ENCODE measurements at regions of chr2 and their contacts with region 1.

Region 1: DNA sequence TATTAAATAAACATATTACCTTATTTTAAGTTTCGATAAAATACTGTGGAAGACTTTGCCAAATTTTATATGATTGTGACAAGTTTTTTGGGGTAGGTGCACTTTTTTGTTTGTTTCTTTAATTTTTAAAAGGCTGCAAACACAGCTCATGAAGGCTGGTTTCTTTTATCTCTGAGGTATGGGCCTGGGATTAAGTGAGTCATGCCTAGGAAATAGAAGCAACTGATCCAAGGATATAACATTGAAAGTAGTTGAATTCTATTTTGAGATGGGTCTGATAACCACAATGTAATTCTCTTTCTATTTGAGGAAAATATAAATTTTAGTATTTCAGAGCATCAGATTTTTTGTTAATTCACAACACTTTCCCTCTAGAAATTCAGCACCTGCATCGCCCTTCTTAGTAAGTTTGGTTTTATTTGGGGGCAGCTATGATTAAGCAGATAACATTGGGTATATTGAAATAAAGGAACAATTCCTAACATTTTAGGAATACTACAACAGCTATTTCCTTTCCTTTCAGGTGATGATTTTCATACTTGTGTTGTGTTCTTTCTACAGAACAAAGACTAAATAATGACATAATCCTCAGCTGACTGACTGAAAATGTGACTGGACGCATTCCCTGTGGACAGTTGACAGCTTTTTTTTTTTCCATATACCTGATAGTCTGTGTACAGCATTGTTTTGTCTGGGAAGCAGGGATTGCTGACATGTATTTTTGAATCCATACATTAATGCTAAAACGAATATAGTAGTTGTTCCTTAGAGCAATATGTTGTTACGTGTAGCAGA is 16.8 kb downstream of the RBM45 start:
- DNase-seq: no peak
- H3K4me3 ChIP-seq: no peak overlapping the region
- H3K27ac ChIP-seq: no peak overlapping the region
- H3K4me1 ChIP-seq: peaks cover 0 to 4% (median 2%) of the 10 kb centered on the region in 4 experiments; a peak in 4 of 7 replicates
- H3K27me3 ChIP-seq: no peaks in the 10 kb centered on the region
- CTCF ChIP-seq: no peak
- EP300 ChIP-seq: no peak
- POLR2A ChIP-seq: no peak
- RAD21 ChIP-seq: no peak

Region 2: GRCh38 chr2:178029342-178029741 is 99.7 kb before region 1 on chr2:
- CTCF ChIA-PET with region 1: no interaction called
- POLR2A ChIA-PET with region 1: no interaction called
- DNase-seq: no peak
- H3K4me3 ChIP-seq: no peak overlapping the region
- H3K27ac ChIP-seq: no peak overlapping the region
- H3K4me1 ChIP-seq: no peaks in the 10 kb centered on the region
- H3K27me3 ChIP-seq: no peaks in the 10 kb centered on the region
- CTCF ChIP-seq: no peak
- EP300 ChIP-seq: no peak
- POLR2A ChIP-seq: no peak
- RAD21 ChIP-seq: no peak

Region 3: GRCh38 chr2:178142274-178143065 is 13.4 kb after region 1 on chr2:
- CTCF ChIA-PET with region 1: interaction called, 18 read pairs
- POLR2A ChIA-PET with region 1: no interaction called
- DNase-seq: no peak
- H3K4me3 ChIP-seq: no peak overlapping the region
- H3K27ac ChIP-seq: no peak overlapping the region
- H3K4me1 ChIP-seq: no peaks in the 10 kb centered on the region
- H3K27me3 ChIP-seq: no peaks in the 10 kb centered on the region
- CTCF ChIP-seq: no peak
- EP300 ChIP-seq: no peak
- POLR2A ChIP-seq: no peak
- RAD21 ChIP-seq: no peak

Region 4: DNA sequence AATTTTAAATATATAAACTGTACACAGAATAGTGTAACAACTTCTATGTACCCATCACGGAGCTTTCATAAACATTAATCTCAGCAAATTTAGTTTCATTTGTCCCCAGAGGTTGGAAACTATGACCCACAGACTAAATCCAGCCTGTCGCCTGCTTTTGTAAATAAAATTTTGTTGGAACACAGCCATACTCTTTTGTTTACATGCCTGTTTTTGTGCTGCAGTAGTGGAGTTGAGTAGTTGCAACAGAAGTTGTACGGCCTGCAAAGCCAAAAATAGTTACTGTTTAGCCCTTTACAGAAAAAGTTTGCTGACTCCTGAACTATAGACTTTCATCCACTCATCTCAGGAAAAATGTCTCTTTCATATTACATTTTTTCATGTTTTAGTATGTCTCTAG is 23.0 kb after region 1 on chr2:
- CTCF ChIA-PET with region 1: interaction called, 15 read pairs
- POLR2A ChIA-PET with region 1: no interaction called
- DNase-seq: no peak
- H3K4me3 ChIP-seq: no peak overlapping the region
- H3K27ac ChIP-seq: no peak overlapping the region
- H3K4me1 ChIP-seq: no peaks in the 10 kb centered on the region
- H3K27me3 ChIP-seq: no peaks in the 10 kb centered on the region
- CTCF ChIP-seq: no peak
- EP300 ChIP-seq: no peak
- POLR2A ChIP-seq: no peak
- RAD21 ChIP-seq: no peak

Region 5: GRCh38 chr2:178208817-178209216 is 79.8 kb after region 1 on chr2:
- CTCF ChIA-PET with region 1: interaction called, 11 read pairs
- POLR2A ChIA-PET with region 1: no interaction called
- DNase-seq: no peak
- H3K4me3 ChIP-seq: no peak overlapping the region
- H3K27ac ChIP-seq: no peak overlapping the region
- H3K4me1 ChIP-seq: peaks cover 0 to 19% (median 13%) of the 10 kb centered on the region in 4 experiments; a peak in 6 of 7 replicates
- H3K27me3 ChIP-seq: peaks cover 18 to 39% (median 29%) of the 10 kb centered on the region in 4 experiments
- CTCF ChIP-seq: peak in 1 of 3 experiments; percentile 16; a peak in 2 of 4 replicates
- EP300 ChIP-seq: no peak
- POLR2A ChIP-seq: no peak
- RAD21 ChIP-seq: peak in 1 of 2 experiments; percentile 13; a peak in 1 of 4 replicates

Region 6: GRCh38 chr2:178250429-178250828 is 121.4 kb after region 1 on chr2:
- CTCF ChIA-PET with region 1: no interaction called
- POLR2A ChIA-PET with region 1: no interaction called
- DNase-seq: no peak
- H3K4me3 ChIP-seq: no peak overlapping the region
- H3K27ac ChIP-seq: no peak overlapping the region
- H3K4me1 ChIP-seq: no peaks in the 10 kb centered on the region
- H3K27me3 ChIP-seq: no peaks in the 10 kb centered on the region
- CTCF ChIP-seq: no peak
- EP300 ChIP-seq: no peak
- POLR2A ChIP-seq: no peak
- RAD21 ChIP-seq: no peak